ENCODE measurements at regions of chr1 and their contacts with region 1.

Region 1: GRCh38 chr1:7470880-7471638 is 300.0 kb upstream of the VAMP3 start:
- DNase-seq: no peak
- H3K4me3 ChIP-seq: no peak overlapping the region
- H3K27ac ChIP-seq: no peak overlapping the region
- H3K4me1 ChIP-seq: no peaks in the 10 kb centered on the region; a peak in 1 of 7 replicates
- H3K27me3 ChIP-seq: no peaks in the 10 kb centered on the region; a peak in 1 of 7 replicates
- CTCF ChIP-seq: no peak
- EP300 ChIP-seq: no peak
- POLR2A ChIP-seq: no peak
- RAD21 ChIP-seq: no peak

Region 2: GRCh38 chr1:7224644-7225043 is 246.4 kb before region 1 on chr1:
- CTCF ChIA-PET with region 1: interaction called, 15 read pairs
- POLR2A ChIA-PET with region 1: no interaction called
- DNase-seq: peak in 1 of 2 experiments; percentile 15
- H3K4me3 ChIP-seq: no peak overlapping the region
- H3K27ac ChIP-seq: no peak overlapping the region
- H3K4me1 ChIP-seq: no peaks in the 10 kb centered on the region; a peak in 3 of 7 replicates
- H3K27me3 ChIP-seq: no peaks in the 10 kb centered on the region; a peak in 1 of 7 replicates
- CTCF ChIP-seq: peak; percentile 68 to 73 (median 72)
- EP300 ChIP-seq: no peak
- POLR2A ChIP-seq: no peak
- RAD21 ChIP-seq: peak; percentile 79 to 87

Region 3: DNA sequence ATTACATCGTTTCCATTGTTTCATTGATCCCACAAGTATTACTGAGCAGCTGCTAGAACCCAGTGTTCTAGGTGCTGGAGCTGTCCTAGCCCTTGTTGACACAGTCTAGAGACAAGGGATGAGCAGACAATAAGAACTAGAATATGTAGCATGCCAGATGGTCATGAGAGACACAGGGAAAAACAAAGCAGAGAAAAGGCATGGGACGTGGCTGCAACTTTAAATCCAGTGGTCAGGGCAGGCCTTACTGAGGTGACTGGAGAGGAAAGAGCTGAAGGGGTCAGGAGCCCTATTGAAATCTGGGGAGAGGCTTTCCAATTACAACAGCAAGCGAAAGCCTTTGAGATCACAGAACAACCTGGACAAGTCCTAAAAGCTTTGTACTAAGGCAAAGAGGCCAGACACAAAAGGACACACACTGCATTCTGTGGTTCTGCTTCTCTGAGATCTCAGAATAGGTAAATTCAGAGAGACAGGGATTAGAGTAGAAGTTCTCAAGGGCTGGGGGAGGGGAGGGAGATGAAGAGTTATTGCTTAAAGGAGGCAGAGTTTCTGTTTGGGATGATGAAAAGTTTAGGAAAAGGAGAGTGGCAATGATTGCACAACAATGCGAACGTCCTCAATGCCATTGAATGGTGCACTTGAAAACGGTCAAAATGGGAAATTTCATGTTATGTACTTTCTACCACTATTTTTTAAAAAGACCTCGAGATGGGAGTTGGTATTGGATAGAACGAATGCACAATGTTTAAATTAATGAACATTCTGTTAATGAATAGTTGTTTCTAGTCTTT is 167.3 kb before region 1 on chr1:
- CTCF ChIA-PET with region 1: no interaction called
- POLR2A ChIA-PET with region 1: no interaction called
- DNase-seq: peak in 1 of 2 experiments; percentile 38
- H3K4me3 ChIP-seq: no peak overlapping the region
- H3K27ac ChIP-seq: no peak overlapping the region
- H3K4me1 ChIP-seq: peaks cover 9 to 11% (median 10%) of the 10 kb centered on the region in 4 experiments
- H3K27me3 ChIP-seq: no peaks in the 10 kb centered on the region
- CTCF ChIP-seq: no peak
- EP300 ChIP-seq: no peak
- POLR2A ChIP-seq: no peak
- RAD21 ChIP-seq: no peak

Region 4: GRCh38 chr1:7388479-7389185 is 82.4 kb before region 1 on chr1:
- CTCF ChIA-PET with region 1: no interaction called
- POLR2A ChIA-PET with region 1: no interaction called
- DNase-seq: peak in 1 of 2 experiments; percentile 49
- H3K4me3 ChIP-seq: no peak overlapping the region
- H3K27ac ChIP-seq: no peak overlapping the region
- H3K4me1 ChIP-seq: peaks cover 0 to 6% (median 2%) of the 10 kb centered on the region in 4 experiments; a peak in 3 of 7 replicates
- H3K27me3 ChIP-seq: no peaks in the 10 kb centered on the region
- CTCF ChIP-seq: no peak
- EP300 ChIP-seq: no peak
- POLR2A ChIP-seq: no peak
- RAD21 ChIP-seq: no peak

Region 5: GRCh38 chr1:7454052-7454815 is 16.8 kb before region 1 on chr1:
- CTCF ChIA-PET with region 1: interaction called, 97 read pairs
- POLR2A ChIA-PET with region 1: interaction called, 3 read pairs
- DNase-seq: no peak
- H3K4me3 ChIP-seq: no peak overlapping the region
- H3K27ac ChIP-seq: no peak overlapping the region
- H3K4me1 ChIP-seq: peaks cover 0 to 13% (median 5%) of the 10 kb centered on the region in 4 experiments; a peak in 5 of 7 replicates
- H3K27me3 ChIP-seq: no peaks in the 10 kb centered on the region
- CTCF ChIP-seq: peak; percentile 36 to 51 (median 42); a peak in 3 of 4 replicates
- EP300 ChIP-seq: no peak
- POLR2A ChIP-seq: no peak
- RAD21 ChIP-seq: peak; percentile 41 to 61; a peak in 3 of 4 replicates

Region 6: DNA sequence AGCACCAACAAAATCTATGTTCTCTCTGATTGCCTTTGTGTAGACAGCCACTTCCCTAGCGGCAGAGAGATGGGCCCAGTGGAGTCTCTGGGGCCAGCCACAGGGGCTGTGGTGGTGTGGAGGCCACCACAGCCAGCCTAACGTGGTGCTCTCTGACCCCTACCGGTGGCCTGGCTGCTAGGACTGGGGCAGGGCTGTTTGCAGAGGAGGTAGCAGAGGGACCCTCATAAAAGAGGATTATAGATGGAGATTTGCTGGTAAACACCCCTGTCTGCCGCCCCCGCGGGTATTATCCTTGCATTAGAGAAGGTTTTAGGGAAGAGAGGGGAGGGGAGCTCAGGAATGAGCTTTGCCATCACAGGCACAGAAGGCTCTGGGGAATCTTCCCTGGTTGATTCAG is 10.3 kb before region 1 on chr1:
- CTCF ChIA-PET with region 1: interaction called, 97 read pairs
- POLR2A ChIA-PET with region 1: no interaction called
- DNase-seq: no peak
- H3K4me3 ChIP-seq: no peak overlapping the region
- H3K27ac ChIP-seq: no peak overlapping the region
- H3K4me1 ChIP-seq: peaks cover 0 to 6% (median 5%) of the 10 kb centered on the region in 4 experiments; a peak in 5 of 7 replicates
- H3K27me3 ChIP-seq: no peaks in the 10 kb centered on the region
- CTCF ChIP-seq: peak in 2 of 3 experiments; percentile 25 to 40; a peak in 2 of 4 replicates
- EP300 ChIP-seq: no peak
- POLR2A ChIP-seq: no peak
- RAD21 ChIP-seq: peak; percentile 35 to 55

Region 7: DNA sequence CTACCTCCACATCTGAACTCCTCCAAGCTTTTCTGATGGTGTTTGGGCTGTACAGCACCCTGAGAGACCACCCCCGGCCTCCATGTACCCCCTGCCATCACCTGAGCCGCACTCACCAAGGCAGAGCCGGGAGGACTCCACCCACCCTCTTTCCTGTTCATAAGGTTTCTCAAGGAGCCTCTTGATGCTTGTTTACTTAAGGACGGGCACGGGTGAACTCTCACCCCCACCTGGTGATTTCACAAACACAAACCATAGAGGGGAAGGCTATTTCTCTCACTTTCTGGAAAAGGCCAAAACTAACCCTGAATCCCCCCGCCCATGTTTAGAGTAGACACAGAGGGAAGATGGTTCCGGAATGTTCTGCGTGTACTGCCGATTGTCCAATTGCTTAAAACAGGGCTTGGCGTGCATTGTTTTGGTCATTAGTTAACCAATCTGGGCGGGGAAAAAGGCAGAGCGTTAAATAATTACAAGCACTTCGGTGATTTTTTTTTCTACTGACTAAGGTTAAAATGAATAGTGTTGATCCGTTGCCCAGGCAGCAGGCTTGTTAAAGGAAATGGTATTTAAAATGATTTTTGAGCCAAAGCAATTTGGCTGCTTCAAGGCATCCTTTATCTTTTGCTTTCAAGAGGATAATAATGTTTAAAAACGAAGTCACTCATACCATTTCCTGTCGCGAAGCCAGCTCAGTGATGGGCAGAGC is 20.2 kb after region 1 on chr1:
- CTCF ChIA-PET with region 1: interaction called, 78 read pairs
- POLR2A ChIA-PET with region 1: no interaction called
- DNase-seq: no peak
- H3K4me3 ChIP-seq: no peak overlapping the region
- H3K27ac ChIP-seq: no peak overlapping the region
- H3K4me1 ChIP-seq: peaks cover 0 to 4% (median 3%) of the 10 kb centered on the region in 4 experiments; a peak in 2 of 7 replicates
- H3K27me3 ChIP-seq: no peaks in the 10 kb centered on the region
- CTCF ChIP-seq: no peak
- EP300 ChIP-seq: no peak
- POLR2A ChIP-seq: no peak
- RAD21 ChIP-seq: no peak